GM10248 (cell line): ENCODE measurements at regions of chr12 and their contacts with region 1.

Region 1: DNA sequence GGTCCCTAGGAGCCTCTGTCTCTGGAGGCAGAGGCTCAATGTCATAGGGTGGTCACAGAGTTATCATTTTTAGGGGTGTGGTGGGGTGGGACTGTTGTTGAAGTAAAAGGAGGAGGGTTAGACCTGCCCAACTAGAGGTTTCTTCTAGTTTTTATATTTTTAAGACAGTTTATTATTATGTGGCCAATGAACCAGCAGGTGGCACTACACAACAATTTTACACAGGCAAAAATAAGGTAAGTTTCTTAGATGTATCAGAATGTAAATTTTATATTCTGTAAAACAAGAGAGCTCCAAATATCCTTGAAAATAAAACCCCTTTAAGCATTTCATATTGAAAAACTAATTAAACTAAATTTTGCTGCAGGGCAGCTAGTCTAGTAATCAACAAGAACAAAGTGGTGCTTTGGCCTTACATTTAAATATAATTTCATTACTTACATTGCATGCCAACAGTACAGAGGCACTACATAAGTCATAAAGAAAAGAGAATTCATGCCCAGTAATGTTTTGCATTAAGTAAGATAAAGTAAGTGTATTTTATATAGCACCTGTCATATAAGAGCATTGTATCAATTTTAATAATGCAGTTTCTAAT is 22.2 kb upstream of the OVCH1 start:
- DNase-seq: peak; percentile 21
- CTCF ChIP-seq: peak; percentile 40

Region 2: GRCh38 chr12:29508949-29509348 is 10.7 kb before region 1 on chr12:
- CTCF ChIA-PET with region 1: interaction called, 25 read pairs
- POLR2A ChIA-PET with region 1: no interaction called
- DNase-seq: no peak
- CTCF ChIP-seq: no peak

Region 3: DNA sequence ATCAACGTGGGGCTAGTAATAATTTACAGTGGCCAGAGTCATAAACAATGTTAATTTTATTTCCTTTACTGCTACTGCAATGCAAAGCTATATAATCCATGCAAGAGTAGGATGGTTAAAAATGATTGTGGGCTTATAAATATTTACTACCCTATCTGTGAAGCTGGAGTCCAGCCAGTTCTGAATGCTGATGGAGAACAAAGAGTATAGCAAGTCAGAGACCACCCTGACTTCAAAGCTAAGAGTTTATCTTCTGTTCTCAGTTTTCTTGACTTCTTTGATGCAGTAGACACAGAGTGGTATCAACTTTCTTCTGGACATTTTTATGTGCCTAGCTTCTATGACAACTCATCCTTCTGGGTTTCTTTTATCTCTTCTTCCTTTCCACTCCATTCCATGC is 11.8 kb after region 1 on chr12:
- CTCF ChIA-PET with region 1: interaction called, 10 read pairs
- POLR2A ChIA-PET with region 1: no interaction called
- DNase-seq: no peak
- CTCF ChIP-seq: no peak